Naive thymus-derived CD4-positive, alpha-beta T cell (primary cell): ENCODE measurements at regions of chr3 and their contacts with region 1.

Region 1: DNA sequence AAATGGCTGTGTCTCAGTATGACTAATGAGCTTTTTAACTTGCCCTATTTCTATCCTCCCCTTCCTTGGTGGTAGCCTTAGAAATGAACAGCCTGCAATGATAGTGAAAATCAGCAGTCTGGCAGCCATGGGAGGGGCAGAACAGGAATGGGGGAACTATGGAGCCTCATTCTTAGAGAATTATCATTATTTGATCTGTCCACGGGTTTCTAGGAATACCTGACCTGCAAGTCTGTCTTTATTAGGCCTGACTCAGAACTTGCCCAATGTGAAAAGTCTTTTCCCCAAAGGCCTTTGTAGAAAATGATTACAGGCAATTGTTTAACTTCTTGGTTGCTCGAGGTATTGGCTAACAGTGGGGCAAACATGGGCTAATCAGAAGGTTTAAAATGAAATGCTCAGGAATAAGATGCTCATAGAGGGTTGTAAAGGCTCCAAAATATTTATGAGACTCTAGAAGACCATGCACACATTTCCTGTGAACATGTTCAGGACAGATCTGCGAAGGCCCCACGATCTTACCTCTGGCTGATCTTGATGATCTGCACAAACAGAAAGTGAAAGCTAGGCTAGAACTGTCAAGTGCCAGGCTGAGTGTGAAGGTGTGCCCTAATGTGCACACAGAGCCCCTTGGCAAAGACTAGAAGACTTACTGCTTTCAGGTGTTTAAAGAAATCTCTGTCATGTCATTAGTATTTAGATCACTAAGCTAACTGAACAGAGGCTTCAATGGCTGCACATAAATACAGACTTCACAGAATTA is 39.6 kb upstream of the LAMP3 start:
- DNase-seq: peak in 3 of 9 donors; percentile 28 to 45 (median 30)
- ATAC-seq: peak; percentile 60
- H3K4me3 ChIP-seq: peak overlapping the region; percentile 36
- H3K4me3 Mint-ChIP-seq: peak overlapping the region; percentile 20 to 76 (median 66)
- H3K27ac ChIP-seq: no peak overlapping the region
- H3K27ac Mint-ChIP-seq: peak overlapping the region in 8 of 9 donors; percentile 10 to 72 (median 56)
- H3K4me1 ChIP-seq: peaks cover 0 to 4% of the 10 kb centered on the region in 2 donors
- H3K4me1 Mint-ChIP-seq: peaks cover 9 to 14% (median 13%) of the 10 kb centered on the region in 7 donors
- H3K27me3 ChIP-seq: no peaks in the 10 kb centered on the region
- H3K27me3 Mint-ChIP-seq: no peaks in the 10 kb centered on the region

Region 2: GRCh38 chr3:183369117-183369516 is 167.0 kb after region 1 on chr3:
- CTCF ChIA-PET with region 1: no interaction called
- POLR2A ChIA-PET with region 1: no interaction called
- intact Hi-C with region 1: loop called in 1 of 2 experiments (anchors 5 kb)
- DNase-seq: no peak
- ATAC-seq: peak; percentile 81
- H3K4me3 ChIP-seq: no peak overlapping the region
- H3K4me3 Mint-ChIP-seq: no peak overlapping the region
- H3K27ac ChIP-seq: no peak overlapping the region
- H3K27ac Mint-ChIP-seq: no peak overlapping the region
- H3K4me1 ChIP-seq: no peaks in the 10 kb centered on the region
- H3K4me1 Mint-ChIP-seq: peaks cover 0 to 13% (median 9%) of the 10 kb centered on the region in 7 donors
- H3K27me3 ChIP-seq: no peaks in the 10 kb centered on the region
- H3K27me3 Mint-ChIP-seq: peaks cover 0 to 5% (median 0%) of the 10 kb centered on the region in 5 donors